AG04450 (cell line): ENCODE measurements at regions of chr3 and their contacts with region 1.

Region 1: DNA sequence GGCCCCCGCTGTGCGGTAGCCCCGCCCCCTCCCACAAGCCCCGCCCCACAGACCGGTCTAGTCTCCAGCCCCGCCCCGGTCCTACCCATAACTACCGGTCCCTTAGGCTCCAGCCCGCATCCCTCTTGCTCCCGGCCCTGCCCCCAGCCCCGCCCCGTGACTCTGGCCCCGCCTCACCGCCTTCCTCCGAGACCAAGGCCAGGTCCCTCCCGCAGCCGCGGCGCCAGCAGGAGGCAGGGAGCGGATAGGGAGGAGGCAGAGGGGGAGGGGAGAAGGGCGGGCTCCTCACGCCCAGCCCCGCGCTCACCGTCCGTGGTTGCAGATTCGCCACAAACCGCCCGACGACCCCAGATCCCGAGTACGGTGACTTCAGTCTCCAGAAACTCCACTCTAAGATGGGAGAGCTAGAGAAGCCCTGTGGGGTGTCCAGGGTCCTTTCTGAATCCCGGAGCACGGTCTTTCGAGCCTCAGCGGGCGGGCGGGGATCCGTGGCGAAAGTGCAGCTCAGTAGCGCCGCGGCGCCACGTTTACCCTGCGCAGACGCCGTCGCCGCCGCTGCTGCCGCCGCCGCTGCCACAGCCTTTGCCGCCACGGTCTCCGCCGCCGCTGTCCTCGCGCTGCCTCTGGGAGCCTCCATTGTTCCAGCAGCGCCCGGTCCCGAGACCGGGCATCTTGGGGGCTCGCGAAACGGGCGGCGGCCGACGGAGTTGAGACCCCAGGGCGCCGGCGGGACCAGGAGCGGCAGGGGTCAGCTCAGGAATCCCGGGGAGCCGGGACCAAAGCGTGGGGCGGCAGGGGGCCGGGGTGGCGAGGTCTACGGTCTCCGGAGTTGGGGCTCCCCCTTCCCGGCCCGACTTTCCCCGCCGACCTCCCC is at the start of gene BRPF1:
- DNase-seq: peak; percentile 99
- H3K4me3 ChIP-seq: peak within 1 kb of the TSS; percentile 92
- H3K27ac ChIP-seq: peak within 1 kb of the TSS; percentile 99
- H3K27me3 ChIP-seq: no peaks in the 10 kb centered on the region
- CTCF ChIP-seq: no peak
- polyA plus RNA-seq, gene BRPF1: 5.7 and 8.3 TPM in 2 replicates

Region 2: DNA sequence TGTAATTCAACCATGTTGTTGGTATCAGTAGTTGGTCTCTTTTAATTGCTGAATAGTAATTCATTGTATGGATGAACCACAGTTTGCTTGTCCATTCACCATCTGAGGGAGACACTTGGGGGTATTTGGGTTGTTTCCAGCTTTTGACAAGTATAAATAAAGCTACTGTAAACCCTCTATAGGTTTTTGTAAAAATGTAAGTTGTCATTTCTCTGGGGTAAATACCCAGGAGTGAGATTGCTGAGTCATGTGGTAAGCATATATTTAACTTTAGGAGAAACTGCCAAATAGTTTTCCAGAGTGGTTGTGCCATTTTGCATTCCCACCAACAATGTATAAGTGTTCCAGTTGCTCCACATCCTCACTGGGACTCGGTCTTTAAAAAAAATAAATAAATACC is 162.4 kb before region 1 on chr3:
- CTCF ChIA-PET with region 1: no interaction called
- POLR2A ChIA-PET with region 1: no interaction called
- DNase-seq: no peak
- H3K4me3 ChIP-seq: no peak overlapping the region
- H3K27ac ChIP-seq: no peak overlapping the region
- H3K27me3 ChIP-seq: no peaks in the 10 kb centered on the region
- CTCF ChIP-seq: no peak

Region 3: DNA sequence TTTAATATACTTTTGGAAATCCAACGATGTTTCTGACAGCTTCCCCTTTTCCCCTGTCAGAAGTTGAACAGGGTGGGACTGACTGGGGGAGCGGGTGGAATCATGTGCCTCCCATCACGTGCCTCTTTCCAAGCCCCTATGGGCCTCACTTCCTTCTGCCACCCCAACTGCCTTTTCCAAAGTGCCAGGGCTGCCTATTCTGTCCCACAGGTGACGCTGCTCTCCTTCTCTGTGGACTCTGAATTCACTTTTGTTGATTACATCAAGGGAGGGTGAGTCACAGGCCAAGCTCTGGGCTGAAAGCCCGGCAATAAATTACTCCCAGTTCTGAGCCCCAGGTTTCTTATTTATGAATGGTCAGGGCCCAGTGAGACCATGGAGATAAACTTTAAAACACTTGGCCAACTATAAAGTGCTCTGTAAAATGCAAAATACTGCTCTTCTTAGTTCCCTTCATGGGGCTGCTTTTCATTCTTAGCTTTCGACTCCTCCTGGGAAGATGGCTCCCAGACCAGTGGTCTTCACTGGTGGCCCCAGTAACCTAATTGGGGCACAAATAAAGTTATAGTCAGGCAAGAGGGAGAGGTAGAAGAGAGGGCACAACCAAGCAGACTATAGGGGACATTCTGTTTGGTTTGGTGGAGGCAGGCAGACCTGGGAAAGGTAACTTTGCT is 15.5 kb before region 1 on chr3:
- CTCF ChIA-PET with region 1: interaction called, 10 read pairs
- POLR2A ChIA-PET with region 1: no interaction called
- DNase-seq: peak; percentile 65
- H3K4me3 ChIP-seq: no peak overlapping the region
- H3K27ac ChIP-seq: no peak overlapping the region
- H3K27me3 ChIP-seq: peaks cover 22% of the 10 kb centered on the region
- CTCF ChIP-seq: peak; percentile 98

Region 4: DNA sequence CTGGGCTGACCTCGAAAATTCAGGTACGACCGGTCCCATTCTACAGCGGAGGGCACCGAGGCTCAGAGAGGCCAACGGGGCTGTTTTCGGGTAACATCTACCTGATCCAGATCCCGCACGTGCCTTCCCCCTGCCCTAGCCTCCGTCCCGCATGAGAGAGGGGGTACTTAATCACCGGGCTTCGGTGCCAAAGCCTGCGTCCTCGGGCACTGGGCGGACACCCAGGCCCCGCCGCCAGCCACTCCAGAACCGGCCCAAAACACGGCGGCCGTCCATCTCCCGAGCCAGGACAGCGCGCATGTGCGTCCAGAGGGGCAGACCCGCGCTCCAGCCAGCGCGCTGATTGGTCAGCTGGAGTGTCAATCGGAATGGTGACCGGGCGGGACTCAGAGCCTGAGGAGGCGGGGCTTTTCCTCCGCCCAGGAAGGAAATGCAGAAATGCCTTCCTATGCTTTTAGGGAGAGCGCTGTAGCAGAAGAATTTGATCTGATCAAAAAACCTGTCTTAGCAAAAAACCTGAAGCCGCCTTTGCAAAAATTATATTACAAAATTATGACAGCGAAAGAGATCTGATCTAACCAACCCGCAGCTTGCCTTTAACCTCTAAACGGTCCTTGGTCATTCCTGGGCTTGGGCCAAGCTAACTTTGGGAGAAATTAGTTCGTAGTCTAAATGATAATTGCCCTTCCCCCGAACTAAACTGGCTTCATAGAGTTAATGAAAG is 112.4 kb after region 1 on chr3 and contains the start of gene RPUSD3:
- CTCF ChIA-PET with region 1: no interaction called
- POLR2A ChIA-PET with region 1: no interaction called
- DNase-seq: peak; percentile 90
- H3K4me3 ChIP-seq: peak within 1 kb of the TSS; percentile 94
- H3K27ac ChIP-seq: peak within 1 kb of the TSS; percentile 61
- H3K27me3 ChIP-seq: no peaks in the 10 kb centered on the region
- CTCF ChIP-seq: no peak
- polyA plus RNA-seq, gene RPUSD3: 29.0 and 34.2 TPM in 2 replicates